MCF 10A (cell line): ENCODE measurements at regions of chr17 and their contacts with region 1.

Region 1: DNA sequence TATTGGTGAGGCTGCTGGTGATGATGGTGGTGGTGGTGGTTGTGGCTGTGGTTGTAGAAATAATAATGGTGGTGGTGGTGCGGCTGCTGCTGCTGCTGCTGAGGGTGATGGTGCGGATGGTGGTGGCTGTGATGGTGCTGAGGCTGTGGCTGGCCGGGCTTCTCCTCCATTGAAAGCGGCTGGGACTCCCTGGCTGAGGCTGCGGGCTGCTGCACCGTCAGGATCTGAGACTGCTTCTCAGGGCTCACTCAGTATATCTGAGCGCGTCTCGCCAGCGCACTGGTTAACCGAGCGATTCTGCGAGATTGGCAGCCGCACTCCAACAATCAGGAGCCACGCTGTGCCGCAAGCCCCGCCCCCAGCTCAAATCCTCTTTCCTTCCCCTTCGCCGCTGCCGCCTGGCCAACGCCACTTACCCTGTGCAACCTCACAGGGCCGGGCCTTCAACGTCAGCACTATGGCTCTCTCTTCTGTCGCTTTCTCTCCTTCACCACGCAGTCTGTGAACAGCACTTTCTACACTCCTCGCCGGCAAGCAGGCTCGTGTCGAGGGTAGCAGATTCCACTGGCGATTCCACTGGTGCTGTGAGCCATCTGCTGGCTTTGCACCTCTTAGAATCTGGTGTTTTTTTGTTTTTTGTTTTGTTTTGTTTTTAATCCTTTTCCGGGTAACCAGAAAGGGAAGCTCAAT is at the start of gene NUFIP2:
- DNase-seq: peak; percentile 98
- H3K4me3 Mint-ChIP-seq: peak within 1 kb of the TSS; percentile 99
- H3K27ac Mint-ChIP-seq: peak within 1 kb of the TSS; percentile 93
- H3K4me1 Mint-ChIP-seq: peaks cover 14% of the 10 kb centered on the region
- H3K27me3 Mint-ChIP-seq: no peaks in the 10 kb centered on the region
- CTCF ChIP-seq: no peak
- total RNA-seq, gene NUFIP2: 78.6 and 88.0 TPM in 2 replicates

Region 2: DNA sequence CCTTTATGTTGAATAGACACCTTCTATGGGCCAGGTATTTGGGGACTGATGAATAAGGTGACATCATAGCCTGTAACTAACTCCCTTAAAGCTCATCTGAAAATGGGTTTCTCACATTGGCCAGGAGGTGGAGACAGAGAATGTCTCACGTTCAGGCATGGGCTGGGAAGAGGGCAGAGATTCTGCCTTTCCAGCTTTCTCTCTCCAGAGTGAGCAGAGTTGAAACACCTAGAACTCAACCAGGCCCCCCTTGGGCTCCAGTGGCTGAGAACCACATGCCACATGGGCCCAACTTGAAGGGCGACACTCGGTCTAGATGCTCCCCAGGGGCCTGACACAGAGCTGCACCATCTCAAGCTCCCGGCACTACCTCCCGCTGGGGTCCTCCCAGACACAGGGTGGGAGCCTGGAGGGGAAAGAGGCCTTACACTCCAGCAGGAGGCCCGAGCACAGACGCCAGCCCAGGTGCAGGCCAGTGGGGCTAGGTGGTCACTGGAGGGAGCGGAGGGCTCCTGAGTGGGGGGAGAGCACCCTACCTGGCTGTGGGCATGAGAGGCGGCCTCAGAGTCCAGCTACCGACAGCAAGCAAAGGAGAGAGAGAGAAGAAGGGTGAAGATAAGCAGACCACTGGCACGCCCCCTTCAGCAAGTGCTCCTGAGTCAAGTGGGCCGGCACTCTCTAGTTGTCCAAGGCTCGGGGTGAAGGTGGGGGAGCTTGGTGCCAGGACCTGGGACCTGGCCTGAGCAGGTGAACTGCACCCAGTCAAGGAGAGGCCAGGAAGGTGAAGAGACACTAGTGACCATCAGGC is 169.7 kb before region 1 on chr17:
- CTCF ChIA-PET with region 1: interaction called, 15 read pairs
- POLR2A ChIA-PET with region 1: interaction called, 9 read pairs
- intact Hi-C with region 1: no loop called
- DNase-seq: peak; percentile 83
- H3K4me3 Mint-ChIP-seq: no peak overlapping the region
- H3K27ac Mint-ChIP-seq: peak overlapping the region; percentile 82
- H3K4me1 Mint-ChIP-seq: peaks cover 13% of the 10 kb centered on the region
- H3K27me3 Mint-ChIP-seq: no peaks in the 10 kb centered on the region
- CTCF ChIP-seq: peak; percentile 77

Region 3: DNA sequence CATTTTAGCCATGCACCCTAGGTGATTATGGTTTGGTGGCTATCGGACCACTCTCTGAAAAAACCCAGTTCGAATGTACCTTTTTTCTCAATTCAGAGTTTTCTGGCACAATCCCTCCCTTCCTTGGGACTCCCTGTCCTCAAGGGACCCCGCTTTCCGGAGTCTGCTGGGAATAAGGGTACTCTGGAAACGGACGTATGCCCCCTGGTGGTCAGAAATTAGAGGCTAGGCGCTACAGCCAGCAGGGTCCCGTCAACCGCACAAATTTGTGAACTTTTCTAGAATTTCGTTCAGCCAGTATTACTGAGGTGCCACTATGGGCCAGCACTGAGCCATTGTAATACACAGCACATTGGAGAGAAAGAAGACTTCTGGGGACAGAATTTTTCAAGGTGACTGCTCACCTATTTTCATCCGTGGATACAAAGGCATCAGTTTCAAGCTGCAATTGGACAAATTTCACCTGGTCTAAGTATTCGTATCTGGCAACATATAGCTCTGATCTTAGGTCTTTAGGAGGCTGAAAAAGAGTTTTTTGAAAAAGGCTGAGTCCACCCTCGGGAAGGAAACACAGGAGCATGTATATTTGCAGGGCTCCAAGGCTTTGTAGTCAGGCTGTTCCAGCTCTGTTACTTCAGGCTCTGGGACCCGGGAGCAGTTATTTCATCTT is 74.5 kb before region 1 on chr17:
- CTCF ChIA-PET with region 1: interaction called, 6 read pairs
- POLR2A ChIA-PET with region 1: interaction called, 5 read pairs
- intact Hi-C with region 1: loop called (anchors 1 kb)
- DNase-seq: peak; percentile 83
- H3K4me3 Mint-ChIP-seq: no peak overlapping the region
- H3K27ac Mint-ChIP-seq: no peak overlapping the region
- H3K4me1 Mint-ChIP-seq: peaks cover 23% of the 10 kb centered on the region
- H3K27me3 Mint-ChIP-seq: no peaks in the 10 kb centered on the region
- CTCF ChIP-seq: peak; percentile 87

Region 4: DNA sequence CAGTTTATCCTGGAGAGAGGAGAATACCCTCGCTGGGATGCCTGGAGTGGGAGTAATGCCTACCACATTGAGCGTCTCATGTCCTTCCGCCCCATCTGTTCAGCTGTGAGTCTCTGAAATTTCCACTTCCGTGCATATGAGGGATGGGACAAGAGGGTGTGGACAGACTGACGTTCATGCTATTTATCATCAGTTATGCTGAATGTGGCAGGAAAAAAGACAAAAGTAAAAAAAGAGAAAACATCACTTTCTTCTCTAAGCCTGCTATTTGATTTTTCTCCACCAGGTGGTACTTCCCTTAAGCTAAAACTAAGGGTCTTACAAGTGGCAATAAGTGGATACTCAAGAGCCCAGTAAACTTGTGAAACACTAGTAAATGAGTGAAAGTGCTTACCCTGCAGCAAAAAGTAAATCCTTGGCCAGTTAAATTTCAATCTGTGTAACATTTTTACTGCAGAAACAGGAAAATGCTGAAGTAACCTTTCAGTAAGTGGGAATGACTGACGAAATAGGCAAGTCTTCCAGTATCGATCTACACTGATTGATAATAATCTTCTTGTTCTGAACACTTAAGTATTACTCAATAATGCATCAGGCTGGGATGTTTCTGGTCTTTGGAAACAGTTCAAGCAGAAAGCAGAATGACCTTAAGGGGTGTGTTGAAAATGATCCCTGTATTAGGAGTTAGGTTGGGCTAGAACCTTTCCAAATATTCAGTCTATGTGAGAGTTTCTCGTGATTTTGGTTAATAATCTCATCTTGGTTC is 41.8 kb before region 1 on chr17:
- CTCF ChIA-PET with region 1: interaction called, 4 read pairs
- POLR2A ChIA-PET with region 1: interaction called, 39 read pairs
- intact Hi-C with region 1: no loop called
- DNase-seq: no peak
- H3K4me3 Mint-ChIP-seq: no peak overlapping the region
- H3K27ac Mint-ChIP-seq: peak overlapping the region; percentile 22
- H3K4me1 Mint-ChIP-seq: peaks cover 30% of the 10 kb centered on the region
- H3K27me3 Mint-ChIP-seq: no peaks in the 10 kb centered on the region
- CTCF ChIP-seq: peak; percentile 62

Region 5: DNA sequence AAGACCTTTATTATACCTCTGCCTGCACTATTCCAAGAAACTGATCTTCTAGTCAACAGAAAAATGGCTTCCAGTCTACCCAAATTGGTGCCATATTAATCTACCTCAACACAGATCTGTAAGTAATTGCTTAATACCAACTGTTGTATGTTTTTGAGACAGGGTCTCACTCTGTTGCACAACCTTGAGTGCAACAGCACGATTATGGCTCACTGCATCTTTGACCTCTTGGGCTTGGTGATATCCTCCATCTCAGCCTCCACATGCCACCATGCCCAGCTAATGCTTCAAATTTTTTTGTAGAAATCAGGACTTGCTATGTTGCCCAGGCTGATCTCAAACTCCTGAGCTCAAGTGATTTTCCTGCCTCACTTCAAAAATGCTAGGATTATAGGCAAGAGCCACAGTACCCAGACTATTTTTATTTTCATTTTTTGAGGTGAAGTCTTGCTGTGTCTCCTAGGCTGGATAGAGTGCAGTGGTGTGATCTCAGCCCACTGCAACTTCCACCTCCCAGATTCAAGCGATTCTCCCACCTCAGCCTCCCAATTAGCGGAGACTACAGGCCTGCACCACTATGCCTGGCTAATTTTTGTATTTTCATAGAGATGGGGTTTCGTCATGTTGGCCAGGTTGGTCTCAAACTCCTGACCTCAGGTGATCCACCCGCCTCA is 14.5 kb before region 1 on chr17:
- CTCF ChIA-PET with region 1: interaction called, 7 read pairs
- POLR2A ChIA-PET with region 1: interaction called, 10 read pairs
- intact Hi-C with region 1: no loop called
- DNase-seq: no peak
- H3K4me3 Mint-ChIP-seq: no peak overlapping the region
- H3K27ac Mint-ChIP-seq: peak overlapping the region; percentile 31
- H3K4me1 Mint-ChIP-seq: peaks cover 26% of the 10 kb centered on the region
- H3K27me3 Mint-ChIP-seq: no peaks in the 10 kb centered on the region
- CTCF ChIP-seq: no peak